GM13976 (cell line): ENCODE measurements at regions of chr13 and their contacts with region 1.

Region 1: GRCh38 chr13:44470638-44471562 is 97.3 kb downstream of the SERP2 start:
- DNase-seq: no peak
- CTCF ChIP-seq: peak; percentile 43

Region 2: DNA sequence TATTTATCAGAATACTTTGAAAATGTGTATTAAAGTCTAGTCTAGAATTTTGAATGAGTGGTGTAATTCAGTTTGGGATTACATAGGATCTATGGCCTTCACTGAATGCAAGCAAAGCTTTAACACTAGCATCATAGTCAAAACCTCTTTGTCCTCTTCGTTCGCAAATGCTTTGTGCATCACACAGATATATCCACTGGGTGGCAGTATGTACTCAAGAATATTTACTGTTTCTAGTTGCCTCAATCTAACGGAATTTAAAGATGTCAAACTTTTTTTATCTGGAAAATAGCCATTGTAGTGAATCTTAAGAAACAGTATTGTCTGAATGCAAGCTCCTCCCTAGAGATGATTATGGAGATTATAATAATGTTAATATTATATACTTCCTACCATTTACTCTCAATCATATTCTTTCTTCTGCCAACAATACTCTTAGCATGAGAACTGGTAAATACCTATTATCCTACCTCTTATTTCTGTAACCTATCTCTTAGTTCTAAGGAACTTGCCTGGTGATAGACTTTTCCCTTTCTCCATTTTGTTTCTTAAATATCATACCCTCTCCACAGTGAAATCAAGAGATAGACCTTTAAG is 565.4 kb before region 1 on chr13:
- in situ Hi-C with region 1: loop called (anchors 10 kb)
- DNase-seq: peak; percentile 59
- CTCF ChIP-seq: peak; percentile 52

Region 3: DNA sequence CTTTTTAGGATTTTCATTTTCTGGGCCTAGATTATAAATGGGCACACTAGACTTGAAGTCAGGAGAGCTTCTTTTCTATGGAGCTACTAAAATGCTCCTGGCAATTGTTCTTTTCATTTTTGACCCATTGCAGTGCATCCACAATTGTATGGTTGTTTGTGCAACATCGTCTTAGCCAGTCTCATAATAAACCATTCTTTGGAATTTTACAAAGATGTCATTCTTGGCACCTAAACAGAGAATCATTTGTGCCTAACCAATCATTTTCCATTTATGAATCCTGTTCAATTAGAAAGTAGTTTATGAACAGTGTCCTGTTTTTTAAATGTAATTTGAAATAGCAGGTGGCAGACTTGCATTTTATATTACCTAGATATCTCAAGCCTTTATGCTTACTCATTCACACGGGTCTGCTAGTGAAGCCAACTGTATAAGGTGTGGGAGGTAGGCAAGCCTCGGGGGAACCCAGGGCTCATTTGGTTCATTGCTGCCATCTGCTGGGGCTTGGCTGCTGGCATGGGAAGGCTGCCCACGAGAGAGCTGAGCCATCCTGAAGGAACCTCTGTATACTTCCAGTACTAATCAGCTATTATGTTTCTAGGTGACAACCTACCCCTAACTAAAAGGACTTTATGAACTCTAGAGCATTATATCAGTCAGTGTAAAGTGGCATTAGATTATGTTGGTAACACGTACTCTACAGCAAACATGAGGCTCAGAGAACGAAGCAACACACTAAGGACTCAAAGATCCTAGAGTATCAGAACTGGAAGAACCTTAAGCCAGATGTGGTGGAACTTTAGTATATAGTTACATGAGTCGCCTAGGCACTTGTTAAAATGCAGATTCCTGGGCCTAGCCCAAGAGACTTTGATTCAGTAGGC is 810.1 kb after region 1 on chr13:
- in situ Hi-C with region 1: loop called (anchors 25 kb)
- DNase-seq: peak; percentile 79
- CTCF ChIP-seq: peak; percentile 69